ENCODE measurements at regions of chr5 and their contacts with region 1.

Region 1: GRCh38 chr5:36606428-36607113 is at the start of gene SLC1A3:
- DNase-seq: peak; percentile 80
- ATAC-seq: peak; percentile 97
- H3K4me3 ChIP-seq: peak within 1 kb of the TSS; percentile 85
- H3K27ac ChIP-seq: peak within 1 kb of the TSS; percentile 66
- H3K4me1 ChIP-seq: peaks cover 15% of the 10 kb centered on the region
- H3K27me3 ChIP-seq: peaks cover 26% of the 10 kb centered on the region
- CTCF ChIP-seq: no peak
- total RNA-seq, gene SLC1A3: 23.2 and 24.7 TPM in 2 replicates

Region 2: GRCh38 chr5:36507332-36507952 is 99.1 kb before region 1 on chr5:
- CTCF ChIA-PET with region 1: no interaction called
- POLR2A ChIA-PET with region 1: no interaction called
- intact Hi-C with region 1: no loop called
- DNase-seq: peak; percentile 86
- ATAC-seq: peak; percentile 39
- H3K4me3 ChIP-seq: no peak overlapping the region
- H3K27ac ChIP-seq: no peak overlapping the region
- H3K4me1 ChIP-seq: peaks cover 18% of the 10 kb centered on the region
- H3K27me3 ChIP-seq: no peaks in the 10 kb centered on the region
- CTCF ChIP-seq: peak; percentile 93

Region 3: DNA sequence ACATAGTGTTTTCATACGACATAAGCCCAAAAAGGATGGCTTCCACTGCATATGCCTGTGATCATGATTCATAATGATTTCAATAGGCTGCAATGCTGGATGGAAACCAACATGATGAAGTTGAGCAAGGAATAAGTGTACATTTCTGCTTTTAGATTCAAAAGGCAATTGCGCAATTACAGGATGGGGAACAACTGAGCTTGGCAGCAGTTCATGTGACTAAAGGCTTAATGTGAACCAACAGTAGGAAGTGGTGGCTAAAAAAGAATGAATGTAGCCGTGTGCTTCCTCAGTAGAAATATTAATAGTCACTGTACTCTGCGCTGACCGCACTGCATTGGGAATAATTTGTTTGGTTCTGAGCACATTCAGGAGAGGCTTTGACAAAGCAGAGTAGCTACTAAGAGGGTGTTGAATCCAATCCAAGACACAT is 51.0 kb after region 1 on chr5:
- CTCF ChIA-PET with region 1: no interaction called
- POLR2A ChIA-PET with region 1: no interaction called
- intact Hi-C with region 1: loop called (anchors 2 kb)
- DNase-seq: peak; percentile 99
- ATAC-seq: peak; percentile 96
- H3K4me3 ChIP-seq: peak overlapping the region; percentile 48; the same call in 1 of the 2 replicates
- H3K27ac ChIP-seq: peak overlapping the region; percentile 96
- H3K4me1 ChIP-seq: peaks cover 44% of the 10 kb centered on the region
- H3K27me3 ChIP-seq: no peaks in the 10 kb centered on the region
- CTCF ChIP-seq: no peak

Region 4: DNA sequence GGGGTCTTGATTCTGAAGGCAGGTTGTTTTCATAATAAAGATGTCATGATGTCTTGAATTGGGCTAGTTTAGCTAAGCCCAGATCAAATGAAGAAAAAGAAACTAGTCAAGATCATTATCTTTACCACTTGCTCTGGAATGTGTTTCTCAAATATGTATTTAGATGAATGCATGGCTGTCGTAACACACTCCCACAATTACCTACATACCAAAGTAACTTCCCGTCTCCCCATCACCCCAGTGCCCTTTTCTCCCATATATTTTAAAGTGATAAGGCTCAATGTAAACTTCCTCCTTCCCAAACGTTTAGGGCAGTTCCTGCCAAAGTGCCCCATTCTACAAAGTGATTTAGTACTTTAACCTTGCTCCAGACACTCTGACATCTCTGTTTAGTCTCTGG is 61.2 kb after region 1 on chr5:
- CTCF ChIA-PET with region 1: no interaction called
- POLR2A ChIA-PET with region 1: no interaction called
- intact Hi-C with region 1: loop called (anchors 2 kb)
- DNase-seq: peak; percentile 73
- ATAC-seq: peak; percentile 53
- H3K4me3 ChIP-seq: no peak overlapping the region
- H3K27ac ChIP-seq: peak overlapping the region; percentile 39
- H3K4me1 ChIP-seq: peaks cover 36% of the 10 kb centered on the region
- H3K27me3 ChIP-seq: no peaks in the 10 kb centered on the region
- CTCF ChIP-seq: no peak

Region 5: DNA sequence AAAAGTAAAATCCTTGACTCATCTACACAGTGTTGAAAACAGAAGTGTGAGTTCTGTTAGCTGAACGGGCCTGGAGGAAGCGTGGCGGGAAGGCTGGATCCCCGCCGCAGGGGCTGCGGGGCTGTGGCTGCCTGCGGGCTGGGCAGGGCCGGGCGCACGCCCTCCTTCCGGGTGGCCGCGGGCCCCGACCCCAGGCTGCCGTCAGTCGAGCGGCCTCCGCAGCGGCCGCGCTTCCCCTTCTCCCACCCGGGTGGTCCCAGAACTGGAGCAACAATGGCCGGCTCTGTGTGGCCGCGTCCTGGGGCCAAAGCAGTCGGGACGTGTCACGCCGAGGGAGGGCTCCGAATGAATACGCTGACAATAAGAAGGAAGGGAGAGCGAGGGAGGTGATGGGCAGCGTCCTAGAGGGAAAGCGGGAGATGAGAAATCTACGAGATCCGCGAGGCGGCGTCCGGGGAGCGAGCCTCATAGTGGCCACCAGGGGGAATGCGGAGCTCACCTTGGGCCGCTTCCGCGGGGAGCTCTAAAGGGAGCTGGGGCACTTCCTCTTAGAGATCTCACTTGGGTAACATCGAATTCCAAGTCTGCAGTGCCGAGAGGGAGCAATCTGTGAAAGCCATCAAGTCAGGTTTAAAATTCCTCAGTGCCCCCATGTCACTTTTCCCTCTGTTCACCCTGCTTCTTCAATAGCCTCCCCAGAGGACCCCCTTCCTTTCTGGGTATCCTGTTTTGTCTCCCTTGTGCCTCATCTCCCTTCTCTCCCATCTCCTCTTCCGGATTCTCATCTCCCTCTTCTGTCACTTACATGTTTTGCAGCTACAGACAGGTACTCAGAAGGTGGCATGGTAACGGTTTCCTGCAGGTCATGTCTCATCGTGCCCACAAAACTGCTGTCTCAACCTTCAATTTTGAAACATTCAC is 83.7 kb after region 1 on chr5:
- CTCF ChIA-PET with region 1: interaction called, 5 read pairs
- POLR2A ChIA-PET with region 1: no interaction called
- intact Hi-C with region 1: loop called (anchors 1 kb)
- DNase-seq: peak; percentile 92
- ATAC-seq: peak; percentile 93
- H3K4me3 ChIP-seq: peak overlapping the region; percentile 84
- H3K27ac ChIP-seq: peak overlapping the region; percentile 41
- H3K4me1 ChIP-seq: peaks cover 8% of the 10 kb centered on the region; the same call in 1 of the 2 replicates
- H3K27me3 ChIP-seq: no peaks in the 10 kb centered on the region
- CTCF ChIP-seq: peak; percentile 76

Measured in PC-3 (cell line).